PC-3 (cell line): ENCODE measurements at regions of chr1 and their contacts with region 1.

Region 1: GRCh38 chr1:85544689-85545215 is 35.8 kb upstream of the CCN1 start:
- DNase-seq: peak; percentile 99
- ATAC-seq: peak; percentile 87
- H3K4me3 ChIP-seq: peak overlapping the region; percentile 25; the same call in 1 of the 2 replicates
- H3K27ac ChIP-seq: peak overlapping the region; percentile 52
- H3K4me1 ChIP-seq: peaks cover 55% of the 10 kb centered on the region
- H3K27me3 ChIP-seq: no peaks in the 10 kb centered on the region
- CTCF ChIP-seq: no peak

Region 2: GRCh38 chr1:85413169-85413568 is 131.6 kb before region 1 on chr1:
- CTCF ChIA-PET with region 1: no interaction called
- POLR2A ChIA-PET with region 1: no interaction called
- intact Hi-C with region 1: no loop called
- DNase-seq: no peak
- ATAC-seq: no peak
- H3K4me3 ChIP-seq: no peak overlapping the region
- H3K27ac ChIP-seq: no peak overlapping the region
- H3K4me1 ChIP-seq: peaks cover 6% of the 10 kb centered on the region
- H3K27me3 ChIP-seq: no peaks in the 10 kb centered on the region
- CTCF ChIP-seq: no peak

Region 3: DNA sequence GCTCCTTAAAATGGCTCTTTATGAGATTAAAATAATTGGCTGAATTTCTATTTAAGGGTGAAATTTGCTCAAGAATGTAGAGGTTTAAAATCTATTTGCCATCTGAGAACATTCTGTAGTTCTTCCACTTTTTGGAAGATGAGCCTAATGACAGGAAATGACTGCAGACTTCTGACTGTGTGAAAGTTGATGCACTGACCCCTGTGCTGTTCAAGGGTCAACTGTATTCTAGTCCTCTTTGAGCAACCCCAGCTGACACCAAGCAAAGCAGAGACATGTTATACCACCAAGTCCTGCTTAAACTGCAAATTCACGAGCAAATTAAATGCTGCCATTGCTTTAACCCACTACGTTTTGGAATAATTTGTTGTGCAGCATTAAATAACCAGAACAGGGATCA is 106.4 kb before region 1 on chr1:
- CTCF ChIA-PET with region 1: no interaction called
- POLR2A ChIA-PET with region 1: no interaction called
- intact Hi-C with region 1: no loop called
- DNase-seq: no peak
- ATAC-seq: no peak
- H3K4me3 ChIP-seq: no peak overlapping the region
- H3K27ac ChIP-seq: no peak overlapping the region
- H3K4me1 ChIP-seq: peaks cover 7% of the 10 kb centered on the region
- H3K27me3 ChIP-seq: no peaks in the 10 kb centered on the region
- CTCF ChIP-seq: no peak

Region 4: GRCh38 chr1:85471558-85471957 is 73.2 kb before region 1 on chr1:
- CTCF ChIA-PET with region 1: no interaction called
- POLR2A ChIA-PET with region 1: no interaction called
- intact Hi-C with region 1: no loop called
- DNase-seq: no peak
- ATAC-seq: no peak
- H3K4me3 ChIP-seq: no peak overlapping the region
- H3K27ac ChIP-seq: no peak overlapping the region
- H3K4me1 ChIP-seq: 0 out of 2 replicates have a peak, but pooled peaks cover 5% of the 10 kb centered on the region
- H3K27me3 ChIP-seq: no peaks in the 10 kb centered on the region
- CTCF ChIP-seq: no peak

Region 5: GRCh38 chr1:85484264-85484663 is 60.5 kb before region 1 on chr1:
- CTCF ChIA-PET with region 1: no interaction called
- POLR2A ChIA-PET with region 1: no interaction called
- intact Hi-C with region 1: loop called (anchors 2 kb)
- DNase-seq: peak; percentile 88
- ATAC-seq: peak; percentile 77
- H3K4me3 ChIP-seq: no peak overlapping the region
- H3K27ac ChIP-seq: no peak overlapping the region
- H3K4me1 ChIP-seq: peaks cover 23% of the 10 kb centered on the region
- H3K27me3 ChIP-seq: no peaks in the 10 kb centered on the region
- CTCF ChIP-seq: no peak

Region 6: DNA sequence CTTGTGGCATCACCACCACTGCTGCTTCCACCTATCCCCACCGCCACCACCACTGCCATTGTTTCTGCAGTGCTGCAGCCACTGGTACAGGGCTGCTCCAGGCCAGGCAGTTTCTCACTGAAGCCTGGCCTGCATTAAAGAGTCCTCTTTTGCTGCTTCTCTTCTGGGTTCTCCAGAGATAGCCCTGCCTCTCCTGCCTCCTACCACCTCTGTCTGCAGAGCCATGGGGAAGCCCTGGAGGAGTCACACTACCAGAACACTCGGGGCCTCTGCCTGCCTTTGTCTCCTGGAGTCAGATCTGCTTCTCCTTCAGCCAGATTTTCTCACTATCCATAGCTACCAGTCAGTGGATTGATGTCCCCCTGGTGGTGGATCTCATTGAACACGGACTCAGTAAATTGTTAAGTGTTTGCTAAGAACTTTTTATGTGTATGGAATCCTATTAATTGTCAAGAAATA is 42.1 kb before region 1 on chr1:
- CTCF ChIA-PET with region 1: no interaction called
- POLR2A ChIA-PET with region 1: interaction called, 5 read pairs
- intact Hi-C with region 1: loop called (anchors 2 kb)
- DNase-seq: peak; percentile 79
- ATAC-seq: peak; percentile 87
- H3K4me3 ChIP-seq: no peak overlapping the region
- H3K27ac ChIP-seq: no peak overlapping the region
- H3K4me1 ChIP-seq: peaks cover 11% of the 10 kb centered on the region
- H3K27me3 ChIP-seq: no peaks in the 10 kb centered on the region
- CTCF ChIP-seq: peak; percentile 75

Region 7: DNA sequence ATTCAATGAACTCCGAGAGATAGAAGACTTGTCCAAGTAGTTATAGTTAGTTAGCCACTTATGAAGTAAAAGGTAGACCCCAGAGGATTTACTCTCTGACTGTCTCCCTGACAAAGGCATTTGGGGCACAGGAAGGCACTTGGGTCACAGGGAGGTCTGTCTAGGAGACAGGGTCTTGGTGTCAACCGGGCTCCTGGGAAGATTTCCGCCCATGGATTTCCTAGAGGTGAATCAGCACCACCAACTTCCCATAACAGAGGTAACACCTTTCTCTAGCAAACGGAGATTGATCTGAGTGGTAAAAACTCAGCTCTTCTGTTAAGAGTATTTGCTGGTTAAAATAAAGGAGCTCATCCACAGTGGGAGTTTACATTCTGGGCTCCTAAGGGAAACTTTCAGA is 52.2 kb after region 1 on chr1:
- CTCF ChIA-PET with region 1: no interaction called
- POLR2A ChIA-PET with region 1: no interaction called
- intact Hi-C with region 1: no loop called
- DNase-seq: no peak
- ATAC-seq: no peak
- H3K4me3 ChIP-seq: no peak overlapping the region
- H3K27ac ChIP-seq: no peak overlapping the region
- H3K4me1 ChIP-seq: peaks cover 8% of the 10 kb centered on the region; the same call in 1 of the 2 replicates
- H3K27me3 ChIP-seq: no peaks in the 10 kb centered on the region
- CTCF ChIP-seq: no peak

Region 8: DNA sequence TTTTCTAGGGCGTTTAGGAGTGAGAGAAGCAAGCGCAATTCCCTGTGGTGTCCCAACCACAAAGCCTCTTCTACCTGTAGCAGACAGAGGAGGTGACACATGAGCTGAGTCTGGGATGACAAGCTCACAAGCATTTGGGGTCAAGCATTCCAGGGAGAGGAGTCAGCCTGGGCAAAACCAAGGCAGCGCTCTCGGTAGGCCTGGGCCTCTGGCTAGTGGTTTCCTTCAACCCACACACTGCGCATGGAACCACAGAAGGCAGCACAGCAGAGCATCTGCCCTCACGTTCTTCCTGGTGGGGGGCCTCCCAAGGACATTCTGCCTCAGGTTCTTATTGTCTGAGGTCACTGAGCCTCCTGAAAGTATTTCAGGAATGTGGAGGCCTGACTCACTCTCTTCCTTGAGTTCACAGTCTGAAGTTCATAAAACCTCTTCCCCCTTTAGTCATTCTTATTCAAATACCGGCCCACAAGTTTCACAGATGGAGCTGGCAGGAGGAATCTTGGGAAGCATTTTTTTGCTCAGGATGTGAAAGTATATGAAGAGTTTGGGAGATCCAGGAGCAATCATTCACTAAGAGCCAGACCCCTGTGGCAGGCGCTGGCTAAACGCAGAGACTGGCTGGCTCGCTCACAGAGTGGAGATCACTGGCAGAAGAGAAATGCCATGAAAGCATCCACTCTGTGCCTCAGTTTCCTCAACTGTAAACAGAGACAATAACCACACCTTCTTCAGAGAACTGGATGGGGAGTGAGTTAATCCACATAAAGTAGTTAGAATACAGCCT is 62.6 kb after region 1 on chr1:
- CTCF ChIA-PET with region 1: no interaction called
- POLR2A ChIA-PET with region 1: no interaction called
- intact Hi-C with region 1: loop called (anchors 2 kb)
- DNase-seq: peak; percentile 99
- ATAC-seq: peak; percentile 84
- H3K4me3 ChIP-seq: no peak overlapping the region
- H3K27ac ChIP-seq: peak overlapping the region; percentile 85
- H3K4me1 ChIP-seq: peaks cover 58% of the 10 kb centered on the region
- H3K27me3 ChIP-seq: no peaks in the 10 kb centered on the region
- CTCF ChIP-seq: no peak

Region 9: DNA sequence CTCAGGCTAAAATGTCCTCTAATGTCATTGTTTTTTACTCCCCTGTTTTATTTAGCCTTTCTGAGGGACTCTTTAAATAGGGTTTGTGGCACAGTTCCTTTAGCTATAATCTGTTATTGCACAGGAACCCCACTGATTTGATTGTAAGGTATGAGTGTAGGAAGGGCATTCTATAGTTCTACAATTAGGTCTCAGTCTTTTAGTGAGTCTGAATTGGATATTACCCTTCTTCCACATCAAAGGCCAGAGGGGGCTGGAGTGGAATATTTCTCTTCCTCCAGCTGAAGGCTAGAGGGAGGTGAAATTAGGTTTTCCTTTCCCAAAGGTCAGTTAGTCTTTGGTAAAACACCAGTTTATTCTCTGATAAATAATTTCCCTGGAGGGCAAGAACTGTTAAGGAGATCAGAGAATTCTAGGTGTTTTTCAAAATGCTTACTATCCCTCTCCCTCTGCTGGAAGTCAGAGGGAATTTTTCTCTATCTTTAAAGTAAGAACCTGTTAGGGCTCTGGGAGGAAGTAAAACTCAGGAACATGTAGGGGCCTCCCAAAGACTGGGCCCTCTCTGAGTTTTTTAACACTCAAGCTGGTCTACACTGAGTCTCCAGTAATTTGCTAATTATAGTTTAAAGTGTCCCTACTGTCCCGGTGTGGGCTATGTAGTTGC is 339.8 kb after region 1 on chr1:
- CTCF ChIA-PET with region 1: no interaction called
- POLR2A ChIA-PET with region 1: interaction called, 10 read pairs
- intact Hi-C with region 1: no loop called
- DNase-seq: peak; percentile 61
- ATAC-seq: peak; percentile 84
- H3K4me3 ChIP-seq: no peak overlapping the region
- H3K27ac ChIP-seq: no peak overlapping the region
- H3K4me1 ChIP-seq: peaks cover 7% of the 10 kb centered on the region; the same call in 1 of the 2 replicates
- H3K27me3 ChIP-seq: no peaks in the 10 kb centered on the region
- CTCF ChIP-seq: peak; percentile 74